ENCODE measurements at regions of chr5 and their contacts with region 1.

Region 1: GRCh38 chr5:38193015-38193581 is 65.3 kb upstream of the EGFLAM start:
- DNase-seq: peak; percentile 76 to 83 (median 78)
- ATAC-seq: peak; percentile 81
- H3K4me3 ChIP-seq: no peak overlapping the region
- H3K27ac ChIP-seq: no peak overlapping the region
- H3K4me1 ChIP-seq: no peaks in the 10 kb centered on the region
- H3K27me3 ChIP-seq: no peaks in the 10 kb centered on the region
- CTCF ChIP-seq: peak; percentile 36 to 89 (median 87)
- POLR2A ChIP-seq: no peak

Region 2: GRCh38 chr5:37412515-37413277 is 780.4 kb before region 1 on chr5:
- intact Hi-C with region 1: loop called (anchors 5 kb)
- DNase-seq: peak; percentile 62 to 68 (median 64)
- ATAC-seq: peak; percentile 78
- H3K4me3 ChIP-seq: no peak overlapping the region
- H3K27ac ChIP-seq: no peak overlapping the region
- H3K4me1 ChIP-seq: no peaks in the 10 kb centered on the region
- H3K27me3 ChIP-seq: no peaks in the 10 kb centered on the region
- CTCF ChIP-seq: peak; percentile 63 to 83 (median 83)
- POLR2A ChIP-seq: no peak

Region 3: GRCh38 chr5:37840053-37841034 is 352.8 kb before region 1 on chr5:
- intact Hi-C with region 1: loop called (anchors 5 kb)
- DNase-seq: peak in 3 of 4 donors; percentile 34 to 41 (median 36)
- ATAC-seq: peak; percentile 47
- H3K4me3 ChIP-seq: no peak overlapping the region
- H3K27ac ChIP-seq: no peak overlapping the region
- H3K4me1 ChIP-seq: peaks cover 47% of the 10 kb centered on the region
- H3K27me3 ChIP-seq: peaks cover 0 to 44% of the 10 kb centered on the region in 2 donors
- CTCF ChIP-seq: peak in 2 of 7 experiments; percentile 17
- POLR2A ChIP-seq: no peak

Region 4: DNA sequence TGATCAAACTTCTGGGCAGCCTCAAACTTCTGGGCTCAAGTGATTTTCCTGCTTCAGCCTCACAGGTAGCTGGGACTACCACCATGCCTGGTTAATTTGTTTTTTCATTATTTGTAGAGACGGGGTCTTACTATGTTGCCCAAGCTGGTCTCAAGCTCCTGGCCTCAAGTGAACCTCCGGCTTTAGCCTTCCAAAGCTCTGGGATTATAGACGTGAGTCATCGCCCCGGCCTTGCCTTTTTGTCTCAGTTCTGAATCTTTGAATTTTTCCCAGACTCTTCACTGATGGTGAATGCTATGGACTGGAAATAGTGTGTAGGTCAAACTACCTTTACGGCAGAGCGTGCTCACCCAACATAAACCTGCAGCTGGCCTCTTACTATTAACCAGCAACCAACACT is 33.0 kb after region 1 on chr5:
- intact Hi-C with region 1: no loop called
- DNase-seq: no peak
- ATAC-seq: no peak
- H3K4me3 ChIP-seq: no peak overlapping the region
- H3K27ac ChIP-seq: no peak overlapping the region
- H3K4me1 ChIP-seq: no peaks in the 10 kb centered on the region
- H3K27me3 ChIP-seq: no peaks in the 10 kb centered on the region
- CTCF ChIP-seq: no peak
- POLR2A ChIP-seq: no peak

Region 5: DNA sequence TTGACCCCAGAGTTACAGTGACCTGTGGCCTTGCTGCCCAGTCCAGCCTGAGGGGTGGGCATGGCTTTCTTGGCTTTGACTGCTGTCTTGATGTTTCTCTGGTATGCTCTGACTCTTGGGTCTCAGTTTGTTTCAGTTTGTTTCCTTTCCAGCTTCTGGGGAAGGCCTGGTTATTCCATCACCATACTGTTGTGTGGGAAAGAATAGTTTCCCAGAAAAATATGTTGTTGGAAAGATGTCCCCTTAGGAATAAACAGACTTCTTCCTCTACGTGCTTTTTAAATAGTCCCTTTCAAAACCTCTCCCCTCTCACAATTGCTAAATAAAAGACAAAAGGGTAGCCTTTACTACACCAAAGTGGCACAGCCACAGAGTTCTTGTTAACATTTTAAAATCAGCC is 114.7 kb after region 1 on chr5:
- intact Hi-C with region 1: no loop called
- DNase-seq: no peak
- ATAC-seq: no peak
- H3K4me3 ChIP-seq: no peak overlapping the region
- H3K27ac ChIP-seq: no peak overlapping the region
- H3K4me1 ChIP-seq: no peaks in the 10 kb centered on the region
- H3K27me3 ChIP-seq: no peaks in the 10 kb centered on the region
- CTCF ChIP-seq: no peak
- POLR2A ChIP-seq: no peak

Measured in body of pancreas (tissue), 4 donors.